B cell (primary cell): ENCODE measurements at regions of chr6 and their contacts with region 1.

Region 1: DNA sequence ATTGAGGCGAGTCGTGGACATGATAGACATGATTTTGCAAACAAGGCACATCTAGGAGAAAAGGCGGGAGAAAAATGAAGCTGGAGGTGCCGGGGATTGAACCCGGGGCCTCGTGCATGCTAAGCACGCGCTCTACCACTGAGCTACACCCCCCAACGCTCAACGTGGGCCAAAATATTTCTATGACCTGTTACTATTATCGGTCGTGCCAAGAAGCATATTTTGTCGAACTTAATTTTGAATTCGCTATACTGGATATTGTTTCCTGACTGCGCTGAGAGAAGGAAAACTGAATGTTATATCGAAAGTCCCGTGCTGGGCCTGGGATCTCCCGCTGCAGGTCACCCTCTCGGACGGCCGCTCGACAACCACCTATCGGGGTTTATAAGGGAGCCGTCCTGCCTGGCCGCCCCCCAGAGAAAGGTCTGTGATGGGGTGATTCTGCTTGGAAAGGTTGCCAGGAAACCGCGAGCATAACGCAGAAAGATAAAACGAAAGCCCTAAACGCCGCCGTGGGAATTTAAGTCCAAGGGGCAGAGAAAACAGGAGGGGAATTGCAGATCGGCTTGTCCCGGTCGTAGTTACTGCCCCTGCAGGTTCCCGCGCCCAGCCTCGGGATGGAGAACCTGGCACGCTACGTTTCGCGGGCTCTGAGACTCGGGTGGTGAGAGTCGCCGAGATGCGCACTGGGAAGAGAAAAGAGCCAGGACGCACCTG is 60.0 kb downstream of the TRIM27 start:
- DNase-seq: peak; percentile 88
- ATAC-seq: peak; percentile 26
- H3K4me3 ChIP-seq: peak overlapping the region; percentile 54 to 78 (median 75)
- H3K4me3 Mint-ChIP-seq: peak overlapping the region; percentile 83
- H3K27ac ChIP-seq: no peak overlapping the region
- H3K27ac Mint-ChIP-seq: peak overlapping the region; percentile 94
- H3K4me1 ChIP-seq: peaks cover 14 to 24% of the 10 kb centered on the region in 2 donors
- H3K4me1 Mint-ChIP-seq: peaks cover 28% of the 10 kb centered on the region
- H3K27me3 ChIP-seq: peaks cover 0 to 4% (median 0%) of the 10 kb centered on the region in 4 experiments
- H3K27me3 Mint-ChIP-seq: peaks cover 10% of the 10 kb centered on the region
- CTCF ChIP-seq: no peak

Region 2: DNA sequence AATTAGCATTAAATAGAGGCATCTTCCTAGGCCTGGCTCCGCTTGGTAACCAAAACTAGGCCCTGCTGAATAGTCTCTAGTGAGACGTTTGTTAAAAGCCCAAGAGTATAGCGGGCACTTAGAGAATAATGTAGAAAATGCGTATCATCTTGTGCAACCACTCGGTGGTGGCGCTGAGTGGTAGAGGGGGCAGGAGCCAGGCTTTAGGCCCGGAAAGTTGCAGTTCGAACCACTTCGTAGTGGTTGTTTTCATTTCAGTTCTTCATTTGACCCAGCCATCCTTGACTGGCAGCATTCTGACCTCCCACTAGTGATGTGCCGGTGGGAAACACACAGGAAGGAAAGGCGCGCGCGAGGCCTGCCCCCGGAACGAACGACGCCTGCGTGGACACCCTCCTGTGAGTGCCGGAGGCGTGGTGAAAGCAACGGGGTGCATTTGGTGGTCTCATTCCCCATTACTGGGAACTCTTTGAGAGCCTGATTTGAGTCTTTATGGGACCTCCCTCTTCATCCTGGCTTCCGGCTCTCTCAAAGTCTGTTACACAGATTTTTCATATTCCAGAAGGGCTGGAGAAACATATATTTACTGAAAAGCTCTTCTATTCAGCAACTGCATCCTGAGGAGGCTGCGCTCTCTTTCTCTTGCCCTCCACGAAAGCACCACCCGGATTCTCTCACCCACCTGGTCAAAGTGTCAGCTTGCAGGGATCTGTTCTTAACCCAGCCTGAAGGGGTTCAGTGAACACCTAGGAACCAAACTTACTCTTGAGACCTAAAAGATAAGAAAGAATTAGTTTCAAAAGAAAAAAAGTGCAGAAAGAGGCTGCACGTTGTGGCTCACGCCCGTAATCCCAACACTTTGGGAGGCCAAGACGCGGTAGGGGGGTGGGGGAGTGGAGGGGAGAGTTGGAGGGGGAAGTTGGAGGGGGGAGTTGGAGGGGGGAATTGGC is 319.8 kb before region 1 on chr6:
- CTCF ChIA-PET with region 1: no interaction called
- POLR2A ChIA-PET with region 1: no interaction called
- intact Hi-C with region 1: no loop called
- DNase-seq: peak; percentile 27
- ATAC-seq: no peak
- H3K4me3 ChIP-seq: peak overlapping the region in 2 of 5 experiments; percentile 12 to 14
- H3K4me3 Mint-ChIP-seq: peak overlapping the region; percentile 67
- H3K27ac ChIP-seq: no peak overlapping the region
- H3K27ac Mint-ChIP-seq: peak overlapping the region; percentile 37
- H3K4me1 ChIP-seq: peaks cover 20 to 21% of the 10 kb centered on the region in 2 donors
- H3K4me1 Mint-ChIP-seq: peaks cover 27% of the 10 kb centered on the region
- H3K27me3 ChIP-seq: peaks cover 0 to 32% (median 27%) of the 10 kb centered on the region in 4 experiments
- H3K27me3 Mint-ChIP-seq: peaks cover 64% of the 10 kb centered on the region
- CTCF ChIP-seq: no peak

Region 3: DNA sequence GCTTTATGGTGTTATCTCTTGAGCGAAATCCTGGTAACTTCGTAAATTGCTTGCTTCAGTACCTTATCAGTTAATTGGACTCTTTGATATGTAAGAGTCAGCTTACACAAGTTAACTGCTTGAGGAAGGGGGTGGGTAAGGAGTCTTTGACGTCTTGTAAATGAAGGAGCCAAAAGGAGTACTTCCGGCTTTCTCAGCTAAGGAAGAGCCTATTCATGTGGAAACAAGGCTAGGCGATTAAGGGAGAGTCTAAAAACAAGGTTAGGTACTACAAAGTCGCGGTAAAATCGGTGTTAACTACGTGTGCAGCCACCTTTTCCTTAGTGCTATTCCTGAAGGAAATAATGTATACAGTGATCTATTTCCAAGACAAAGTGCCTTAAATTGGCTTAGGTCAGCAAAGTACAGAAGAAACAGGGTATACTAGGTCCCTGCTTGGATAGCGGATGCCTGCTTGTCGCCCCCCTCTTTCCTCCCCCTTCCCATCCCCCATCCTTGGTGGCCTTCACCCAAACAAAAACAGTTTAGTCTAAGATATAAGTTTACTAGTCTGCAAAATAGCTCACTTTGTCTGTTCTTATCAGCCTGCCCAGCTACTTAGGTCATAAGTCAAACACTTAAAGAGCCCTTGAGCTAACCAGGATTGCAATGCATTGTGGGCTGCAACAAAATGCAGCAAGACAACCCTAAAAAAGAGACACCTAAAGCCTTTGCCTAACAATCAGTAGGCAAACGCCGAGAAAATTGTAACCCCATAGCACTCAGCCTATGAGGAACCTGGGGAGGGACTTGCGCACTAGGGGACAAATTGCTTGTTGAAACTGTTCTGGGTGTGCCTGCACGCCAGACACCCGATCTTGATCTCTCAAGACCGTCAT is 87.3 kb before region 1 on chr6:
- CTCF ChIA-PET with region 1: no interaction called
- POLR2A ChIA-PET with region 1: no interaction called
- intact Hi-C with region 1: no loop called
- DNase-seq: peak; percentile 33
- ATAC-seq: no peak
- H3K4me3 ChIP-seq: no peak overlapping the region
- H3K4me3 Mint-ChIP-seq: no peak overlapping the region
- H3K27ac ChIP-seq: no peak overlapping the region
- H3K27ac Mint-ChIP-seq: no peak overlapping the region
- H3K4me1 ChIP-seq: peaks cover 1 to 8% of the 10 kb centered on the region in 2 donors
- H3K4me1 Mint-ChIP-seq: peaks cover 7% of the 10 kb centered on the region
- H3K27me3 ChIP-seq: peaks cover 0 to 92% (median 79%) of the 10 kb centered on the region in 4 experiments
- H3K27me3 Mint-ChIP-seq: peaks cover 87% of the 10 kb centered on the region
- CTCF ChIP-seq: no peak

Region 4: DNA sequence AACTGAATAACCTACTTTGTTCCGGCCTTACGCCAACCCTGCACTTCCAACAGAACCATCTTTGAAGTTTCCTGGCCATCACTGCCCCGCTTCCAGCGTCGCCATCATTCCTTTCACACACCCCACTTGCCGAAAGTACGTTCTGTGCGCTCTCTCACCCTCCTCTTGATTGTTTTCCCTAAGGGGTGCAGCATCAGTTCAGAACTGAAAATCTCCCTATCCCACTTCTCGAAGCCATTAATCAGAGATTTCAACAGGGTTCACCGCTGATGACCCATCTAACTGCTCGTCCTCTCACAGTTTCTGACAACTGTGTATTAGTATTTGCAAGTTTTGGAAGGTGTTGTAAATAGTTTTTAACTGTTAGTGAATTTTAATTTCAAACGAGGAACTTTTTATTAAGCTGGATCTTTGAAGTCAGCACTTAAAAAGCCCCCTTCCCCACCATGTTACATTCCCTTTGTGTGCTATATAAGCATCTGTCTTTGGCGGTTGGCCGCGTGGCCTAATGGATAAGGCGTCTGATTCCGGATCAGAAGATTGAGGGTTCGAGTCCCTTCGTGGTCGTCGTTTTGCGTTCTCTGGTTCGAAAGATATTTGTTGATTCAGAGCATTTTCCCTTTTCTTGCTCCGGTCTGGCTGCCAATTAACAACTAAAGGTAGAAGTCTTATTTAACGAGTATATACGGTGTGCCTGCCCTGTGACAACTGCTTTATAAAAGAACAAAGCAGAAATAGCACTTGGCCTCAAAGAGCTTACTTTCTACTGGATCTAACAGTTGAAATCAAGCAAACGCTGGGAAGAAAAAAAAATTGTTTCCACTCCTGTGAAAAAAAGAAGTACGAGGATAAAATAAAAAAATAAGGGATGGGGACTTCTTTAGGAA is 17.4 kb after region 1 on chr6:
- CTCF ChIA-PET with region 1: interaction called, 3 read pairs
- POLR2A ChIA-PET with region 1: interaction called, 4 read pairs
- intact Hi-C with region 1: loop called (anchors 1 kb)
- DNase-seq: peak; percentile 74
- ATAC-seq: no peak
- H3K4me3 ChIP-seq: peak overlapping the region; percentile 25 to 51 (median 49)
- H3K4me3 Mint-ChIP-seq: peak overlapping the region; percentile 87
- H3K27ac ChIP-seq: no peak overlapping the region
- H3K27ac Mint-ChIP-seq: peak overlapping the region; percentile 90
- H3K4me1 ChIP-seq: peaks cover 19 to 22% of the 10 kb centered on the region in 2 donors
- H3K4me1 Mint-ChIP-seq: peaks cover 27% of the 10 kb centered on the region
- H3K27me3 ChIP-seq: peaks cover 0 to 46% (median 36%) of the 10 kb centered on the region in 4 experiments
- H3K27me3 Mint-ChIP-seq: peaks cover 57% of the 10 kb centered on the region
- CTCF ChIP-seq: no peak

Region 5: DNA sequence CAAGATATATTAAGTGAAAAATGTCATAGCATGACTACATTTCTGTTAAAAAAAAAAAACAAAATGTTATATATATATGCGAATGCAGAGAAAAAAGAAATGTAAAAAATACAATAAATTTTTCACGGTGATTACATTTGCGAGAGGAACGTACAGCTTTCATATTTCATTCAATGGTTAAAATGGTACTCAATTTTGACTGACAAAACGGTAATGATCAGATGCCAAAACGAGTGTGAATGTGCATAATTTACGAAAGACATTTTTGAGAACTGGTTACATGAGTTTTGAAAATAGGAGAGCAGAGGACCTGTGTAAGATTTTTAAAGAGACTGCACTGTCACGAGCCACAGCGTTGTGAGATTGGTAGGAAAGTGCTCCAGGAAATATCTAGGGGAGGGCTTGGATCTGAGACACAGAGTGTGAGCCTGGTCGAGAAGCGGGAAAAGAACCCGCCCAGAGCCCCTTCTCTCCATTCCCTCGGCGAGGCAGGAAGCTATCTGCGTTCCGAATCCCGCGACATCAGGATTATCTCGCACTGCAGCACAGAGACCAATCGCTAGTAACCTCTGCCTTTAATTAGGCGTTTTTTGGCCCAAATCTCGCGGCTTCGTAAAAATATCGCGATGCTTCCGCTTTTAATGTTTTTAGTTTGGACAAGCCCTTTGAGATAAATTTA is 31.5 kb after region 1 on chr6:
- CTCF ChIA-PET with region 1: interaction called, 4 read pairs
- POLR2A ChIA-PET with region 1: interaction called, 9 read pairs
- intact Hi-C with region 1: loop called (anchors 1 kb)
- DNase-seq: peak; percentile 96
- ATAC-seq: peak; percentile 58
- H3K4me3 ChIP-seq: peak overlapping the region; percentile 73 to 86 (median 83)
- H3K4me3 Mint-ChIP-seq: peak overlapping the region; percentile 99
- H3K27ac ChIP-seq: peak overlapping the region; percentile 97
- H3K27ac Mint-ChIP-seq: peak overlapping the region; percentile 100
- H3K4me1 ChIP-seq: peaks cover 7 to 12% of the 10 kb centered on the region in 2 donors
- H3K4me1 Mint-ChIP-seq: peaks cover 21% of the 10 kb centered on the region
- H3K27me3 ChIP-seq: no peaks in the 10 kb centered on the region
- H3K27me3 Mint-ChIP-seq: peaks cover 4% of the 10 kb centered on the region
- CTCF ChIP-seq: no peak

Region 6: DNA sequence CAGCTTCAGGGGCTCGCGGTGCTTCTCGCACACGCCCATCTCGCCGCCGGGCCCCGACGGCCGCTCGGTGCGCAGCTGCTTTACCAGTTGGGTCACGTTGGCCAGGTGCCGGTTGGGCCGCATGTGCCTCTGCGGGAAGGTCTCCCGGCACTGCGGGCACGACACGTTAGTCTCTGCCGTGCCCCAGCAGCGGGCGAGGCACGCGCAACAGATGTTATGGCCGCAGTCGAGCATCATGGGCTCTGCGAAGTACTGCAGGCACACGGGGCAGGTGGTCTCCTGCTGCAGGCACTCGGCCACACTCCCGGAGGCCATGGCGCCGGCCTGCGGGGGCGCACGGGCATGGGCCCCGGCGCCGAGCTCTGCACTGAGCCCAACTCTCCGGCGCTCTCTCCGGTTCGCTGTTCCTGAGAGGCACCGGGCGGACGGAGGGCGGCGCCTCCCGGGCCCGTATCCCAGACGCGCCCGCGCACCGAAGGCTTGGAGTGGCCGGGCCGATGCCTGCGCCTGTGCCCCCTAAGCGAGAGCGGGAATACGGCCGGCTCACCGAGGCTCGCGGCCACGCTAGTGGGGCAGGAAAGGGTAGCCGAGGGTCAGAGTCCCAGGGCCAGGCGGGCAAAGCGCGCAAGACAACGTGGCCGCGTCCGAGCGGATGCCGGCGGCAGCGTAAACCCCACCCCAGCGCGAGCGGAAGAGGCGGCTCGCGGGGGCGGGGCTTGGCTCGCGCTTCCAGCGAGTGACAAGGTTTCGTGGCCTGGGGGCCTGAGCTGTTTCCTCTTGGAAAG is 59.7 kb after region 1 on chr6 and contains the start of gene TRIM27:
- CTCF ChIA-PET with region 1: no interaction called
- POLR2A ChIA-PET with region 1: interaction called, 8 read pairs
- intact Hi-C with region 1: loop called (anchors 1 kb)
- DNase-seq: peak; percentile 90
- ATAC-seq: peak; percentile 86
- H3K4me3 ChIP-seq: peak within 1 kb of the TSS; percentile 71 to 97 (median 92)
- H3K4me3 Mint-ChIP-seq: peak within 1 kb of the TSS; percentile 90
- H3K27ac ChIP-seq: peak within 1 kb of the TSS; percentile 81 to 83
- H3K27ac Mint-ChIP-seq: peak within 1 kb of the TSS; percentile 97
- H3K4me1 ChIP-seq: peaks cover 30% of the 10 kb centered on the region in 2 donors
- H3K4me1 Mint-ChIP-seq: peaks cover 34% of the 10 kb centered on the region
- H3K27me3 ChIP-seq: no peaks in the 10 kb centered on the region
- H3K27me3 Mint-ChIP-seq: no peaks in the 10 kb centered on the region
- CTCF ChIP-seq: peak; percentile 21
- total RNA-seq, gene TRIM27: 66.7 and 70.0 TPM in 2 replicates

Region 7: DNA sequence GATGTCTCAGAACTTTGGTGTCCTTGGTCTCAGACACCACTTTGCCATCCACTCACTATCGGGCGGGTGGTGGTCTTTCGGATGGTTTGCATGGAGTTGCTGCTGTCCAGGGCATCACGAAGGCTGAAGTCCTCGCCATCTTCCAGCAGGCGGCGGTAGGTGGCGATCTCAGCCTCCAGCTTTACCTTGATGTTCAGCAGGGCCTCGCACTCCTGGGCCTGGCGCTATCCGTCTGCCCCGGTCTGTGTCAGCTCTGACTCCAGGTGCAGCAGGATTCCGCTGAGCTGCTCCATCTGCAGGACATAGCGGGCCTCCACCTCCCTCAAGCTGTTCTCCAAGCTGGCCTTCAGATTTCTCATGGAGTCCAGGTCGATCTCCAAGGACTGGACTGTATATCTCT is 105.4 kb after region 1 on chr6:
- CTCF ChIA-PET with region 1: no interaction called
- POLR2A ChIA-PET with region 1: no interaction called
- intact Hi-C with region 1: no loop called
- DNase-seq: no peak
- ATAC-seq: no peak
- H3K4me3 ChIP-seq: no peak overlapping the region
- H3K4me3 Mint-ChIP-seq: no peak overlapping the region
- H3K27ac ChIP-seq: no peak overlapping the region
- H3K27ac Mint-ChIP-seq: no peak overlapping the region
- H3K4me1 ChIP-seq: no peaks in the 10 kb centered on the region
- H3K4me1 Mint-ChIP-seq: no peaks in the 10 kb centered on the region
- H3K27me3 ChIP-seq: peaks cover 0 to 2% (median 0%) of the 10 kb centered on the region in 4 experiments
- H3K27me3 Mint-ChIP-seq: peaks cover 23% of the 10 kb centered on the region
- CTCF ChIP-seq: no peak